PC-9 (cell line): ENCODE measurements at regions of chr5 and their contacts with region 1.

Region 1: GRCh38 chr5:40321514-40321913 is 358.2 kb upstream of the PTGER4 start:
- DNase-seq: no peak
- H3K4me3 ChIP-seq: no peak overlapping the region
- H3K27ac ChIP-seq: no peak overlapping the region
- H3K4me1 ChIP-seq: no peaks in the 10 kb centered on the region
- H3K27me3 ChIP-seq: no peaks in the 10 kb centered on the region
- CTCF ChIP-seq: no peak

Region 2: GRCh38 chr5:40361378-40361777 is 39.9 kb after region 1 on chr5:
- CTCF ChIA-PET with region 1: no interaction called
- POLR2A ChIA-PET with region 1: no interaction called
- intact Hi-C with region 1: loop called (anchors 2 kb)
- DNase-seq: no peak
- H3K4me3 ChIP-seq: no peak overlapping the region
- H3K27ac ChIP-seq: no peak overlapping the region
- H3K4me1 ChIP-seq: no peaks in the 10 kb centered on the region
- H3K27me3 ChIP-seq: no peaks in the 10 kb centered on the region
- CTCF ChIP-seq: no peak